Mammary epithelial cell (primary cell): ENCODE measurements at regions of chr15 and their contacts with region 1.

Region 1: DNA sequence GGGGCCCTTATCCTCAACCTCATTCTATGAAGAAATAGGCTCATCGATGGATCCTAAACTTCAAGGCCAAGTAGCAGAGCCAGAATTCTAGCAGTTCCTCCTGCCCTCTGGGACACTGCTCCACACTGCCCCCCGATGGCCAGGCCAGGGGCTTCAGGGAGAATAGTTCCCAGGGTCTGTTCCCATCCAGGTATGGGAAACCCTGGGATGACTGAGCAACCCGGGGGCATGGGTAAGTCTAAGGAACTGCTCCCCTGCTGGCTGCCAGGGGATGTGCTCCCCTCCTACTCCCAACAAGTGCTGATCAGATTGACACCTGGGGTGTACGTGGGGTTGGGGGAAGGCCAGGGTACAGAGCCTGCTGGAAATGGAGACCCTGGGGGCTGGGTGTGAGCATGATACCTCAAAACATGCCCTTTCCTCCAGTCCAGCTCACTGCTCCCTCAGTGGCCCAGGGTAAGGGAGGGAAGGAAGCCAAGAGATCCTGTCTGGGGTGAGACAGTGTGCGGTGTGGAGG is 7.6 kb downstream of the ULK3 start:
- DNase-seq: peak; percentile 70
- H3K4me3 ChIP-seq: no peak overlapping the region
- H3K27ac ChIP-seq: no peak overlapping the region
- H3K4me1 ChIP-seq: no peaks in the 10 kb centered on the region
- H3K27me3 ChIP-seq: no peaks in the 10 kb centered on the region
- CTCF ChIP-seq: peak; percentile 84 to 98

Region 2: GRCh38 chr15:73908030-73908821 is 927.1 kb before region 1 on chr15:
- CTCF ChIA-PET with region 1: no interaction called
- dilution Hi-C with region 1: no loop called
- in situ Hi-C with region 1: no loop called
- intact Hi-C with region 1: no loop called
- DNase-seq: peak; percentile 45
- H3K4me3 ChIP-seq: no peak overlapping the region
- H3K27ac ChIP-seq: no peak overlapping the region
- H3K4me1 ChIP-seq: no peaks in the 10 kb centered on the region
- H3K27me3 ChIP-seq: no peaks in the 10 kb centered on the region
- CTCF ChIP-seq: peak; percentile 90 to 97

Region 3: GRCh38 chr15:74799856-74800547 is 35.4 kb before region 1 on chr15:
- CTCF ChIA-PET with region 1: no interaction called
- dilution Hi-C with region 1: no loop called
- in situ Hi-C with region 1: no loop called
- intact Hi-C with region 1: loop called (anchors 1 kb)
- DNase-seq: peak; percentile 95
- H3K4me3 ChIP-seq: peak overlapping the region in 1 of 3 experiments; percentile 12
- H3K27ac ChIP-seq: peak overlapping the region; percentile 91
- H3K4me1 ChIP-seq: peaks cover 28% of the 10 kb centered on the region
- H3K27me3 ChIP-seq: no peaks in the 10 kb centered on the region
- CTCF ChIP-seq: peak; percentile 96 to 100

Region 4: GRCh38 chr15:74937596-74938296 is 102.4 kb after region 1 on chr15 and contains the start of gene COX5A:
- CTCF ChIA-PET with region 1: no interaction called
- dilution Hi-C with region 1: no loop called
- in situ Hi-C with region 1: no loop called
- intact Hi-C with region 1: no loop called
- DNase-seq: peak; percentile 97
- H3K4me3 ChIP-seq: peak within 1 kb of the TSS; percentile 75 to 83 (median 81)
- H3K27ac ChIP-seq: peak within 1 kb of the TSS; percentile 66
- H3K4me1 ChIP-seq: peaks cover 2% of the 10 kb centered on the region
- H3K27me3 ChIP-seq: no peaks in the 10 kb centered on the region
- CTCF ChIP-seq: no peak
- total RNA-seq, gene COX5A: 40.2 to 209 TPM